ENCODE measurements at regions of chr1 and their contacts with region 1.

Region 1: GRCh38 chr1:94020731-94021579 is 100.0 kb downstream of the ABCA4 start:
- DNase-seq: no peak
- H3K4me3 ChIP-seq: no peak overlapping the region
- H3K27ac ChIP-seq: no peak overlapping the region
- H3K4me1 ChIP-seq: peaks cover 0 to 9% (median 0%) of the 10 kb centered on the region in 4 donors
- H3K27me3 ChIP-seq: no peaks in the 10 kb centered on the region
- CTCF ChIP-seq: no peak

Region 2: DNA sequence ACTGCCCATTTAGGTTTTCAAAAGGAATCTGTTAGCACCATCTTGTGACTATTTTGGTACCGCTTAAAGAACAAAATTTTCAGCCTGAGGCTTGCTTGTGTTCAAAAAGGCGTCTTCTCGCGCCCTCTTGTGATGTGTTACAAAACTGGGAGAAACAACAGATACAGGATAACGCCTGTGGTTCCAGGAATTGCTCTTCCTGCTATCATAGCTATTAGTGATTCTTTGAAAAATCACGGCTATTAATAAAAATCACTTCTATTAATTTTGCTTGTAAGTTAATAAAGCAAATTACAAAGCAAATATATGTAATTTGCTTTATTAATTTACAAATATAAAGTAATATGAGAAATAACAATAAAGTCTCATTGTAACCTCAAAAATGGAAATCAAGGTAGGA is 315.0 kb after region 1 on chr1:
- intact Hi-C with region 1: loop called (anchors 5 kb)
- DNase-seq: peak; percentile 77 to 83
- H3K4me3 ChIP-seq: no peak overlapping the region
- H3K27ac ChIP-seq: no peak overlapping the region
- H3K4me1 ChIP-seq: peaks cover 0 to 19% (median 9%) of the 10 kb centered on the region in 4 donors
- H3K27me3 ChIP-seq: no peaks in the 10 kb centered on the region
- CTCF ChIP-seq: peak; percentile 82 to 94

Measured in tibial artery (tissue), 4 donors.